ENCODE measurements at regions of chr9 and their contacts with region 1.

Region 1: DNA sequence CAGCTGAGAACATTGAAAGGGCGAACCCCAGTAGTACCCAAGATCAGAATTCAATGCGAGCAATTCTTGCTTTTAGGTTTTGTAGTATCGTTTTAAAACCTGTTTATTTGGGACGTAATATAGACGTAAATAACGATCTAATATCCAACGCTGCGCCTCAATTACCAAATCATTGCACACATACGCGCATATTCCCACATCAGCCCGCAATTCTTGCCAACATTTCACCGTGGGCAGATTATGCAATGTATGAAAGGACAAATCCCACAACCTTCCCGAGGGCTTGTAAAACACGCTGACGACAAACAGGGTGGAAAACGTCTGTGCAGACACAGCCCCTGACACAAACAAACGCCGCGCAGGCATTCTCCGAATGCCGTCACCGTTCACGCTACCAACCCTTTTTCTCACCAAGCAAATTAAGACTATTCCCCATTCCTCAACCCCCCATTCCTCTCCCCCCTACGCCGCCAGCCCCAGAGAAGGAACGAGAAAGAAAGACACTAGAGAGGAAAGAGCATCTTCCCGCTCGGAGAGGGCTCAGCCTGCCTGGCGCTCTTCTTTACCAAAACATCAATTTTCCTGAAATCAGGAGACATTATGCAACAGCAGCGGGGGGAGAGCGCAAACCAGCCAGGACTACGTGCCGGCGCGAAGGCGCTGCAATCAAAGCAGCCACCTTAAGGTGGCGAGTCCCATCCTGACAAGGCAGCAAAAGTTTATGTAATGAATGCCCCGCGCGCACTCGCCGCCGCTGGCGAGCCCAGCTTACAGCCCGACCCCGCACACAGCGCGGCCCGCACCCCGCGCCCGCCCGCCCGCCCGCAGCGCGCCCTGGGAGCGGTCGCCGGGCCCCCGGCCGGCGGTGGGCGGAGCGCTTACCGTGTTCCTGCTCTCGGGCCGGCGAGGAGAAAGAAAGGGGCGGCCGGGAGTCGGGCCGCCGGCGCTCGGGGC is 597 bp downstream of the NFIL3 start:
- DNase-seq: peak; percentile 50 to 70 (median 61)
- ATAC-seq: peak; percentile 54
- H3K4me3 ChIP-seq: peak overlapping the region; percentile 55
- H3K4me3 Mint-ChIP-seq: peak overlapping the region; percentile 86 to 97 (median 92)
- H3K27ac ChIP-seq: peak overlapping the region; percentile 54
- H3K27ac Mint-ChIP-seq: peak overlapping the region; percentile 5 to 98 (median 61)
- H3K4me1 ChIP-seq: peaks cover 20 to 25% of the 10 kb centered on the region in 2 donors
- H3K4me1 Mint-ChIP-seq: peaks cover 18 to 63% (median 45%) of the 10 kb centered on the region in 7 donors
- H3K27me3 ChIP-seq: peaks cover 0 to 12% of the 10 kb centered on the region in 2 donors
- H3K27me3 Mint-ChIP-seq: peaks cover 0 to 35% (median 21%) of the 10 kb centered on the region in 5 donors

Region 2: GRCh38 chr9:89602978-89603766 is 1819.9 kb before region 1 on chr9:
- CTCF ChIA-PET with region 1: no interaction called
- POLR2A ChIA-PET with region 1: no interaction called
- intact Hi-C with region 1: loop called in 1 of 2 experiments (anchors 2 kb)
- DNase-seq: peak; percentile 74 to 88 (median 85)
- ATAC-seq: peak; percentile 55
- H3K4me3 ChIP-seq: peak overlapping the region; percentile 72
- H3K4me3 Mint-ChIP-seq: peak overlapping the region; percentile 79 to 92 (median 88)
- H3K27ac ChIP-seq: no peak overlapping the region
- H3K27ac Mint-ChIP-seq: peak overlapping the region in 7 of 9 donors; percentile 12 to 88 (median 62)
- H3K4me1 ChIP-seq: peaks cover 12 to 23% of the 10 kb centered on the region in 2 donors
- H3K4me1 Mint-ChIP-seq: peaks cover 0 to 34% (median 23%) of the 10 kb centered on the region in 7 donors
- H3K27me3 ChIP-seq: no peaks in the 10 kb centered on the region
- H3K27me3 Mint-ChIP-seq: peaks cover 0 to 21% (median 0%) of the 10 kb centered on the region in 5 donors

Region 3: GRCh38 chr9:90985631-90986030 is 437.4 kb before region 1 on chr9:
- CTCF ChIA-PET with region 1: interaction called, 4 read pairs
- POLR2A ChIA-PET with region 1: no interaction called
- intact Hi-C with region 1: loop called (anchors 1 to 5 kb)
- DNase-seq: no peak
- ATAC-seq: no peak
- H3K4me3 ChIP-seq: no peak overlapping the region
- H3K4me3 Mint-ChIP-seq: no peak overlapping the region
- H3K27ac ChIP-seq: no peak overlapping the region
- H3K27ac Mint-ChIP-seq: no peak overlapping the region
- H3K4me1 ChIP-seq: no peaks in the 10 kb centered on the region
- H3K4me1 Mint-ChIP-seq: peaks cover 0 to 3% (median 0%) of the 10 kb centered on the region in 7 donors
- H3K27me3 ChIP-seq: no peaks in the 10 kb centered on the region
- H3K27me3 Mint-ChIP-seq: peaks cover 0 to 9% (median 5%) of the 10 kb centered on the region in 5 donors

Region 4: GRCh38 chr9:91101611-91102168 is 321.3 kb before region 1 on chr9:
- CTCF ChIA-PET with region 1: interaction called, 3 read pairs
- POLR2A ChIA-PET with region 1: no interaction called
- intact Hi-C with region 1: loop called (anchors 1 to 2 kb)
- DNase-seq: peak; percentile 31 to 91 (median 87)
- ATAC-seq: peak; percentile 90
- H3K4me3 ChIP-seq: no peak overlapping the region
- H3K4me3 Mint-ChIP-seq: peak overlapping the region in 9 of 10 donors; percentile 44 to 82 (median 66)
- H3K27ac ChIP-seq: no peak overlapping the region
- H3K27ac Mint-ChIP-seq: peak overlapping the region in 7 of 9 donors; percentile 43 to 85 (median 78)
- H3K4me1 ChIP-seq: peaks cover 32 to 34% of the 10 kb centered on the region in 2 donors
- H3K4me1 Mint-ChIP-seq: peaks cover 27 to 61% (median 36%) of the 10 kb centered on the region in 7 donors
- H3K27me3 ChIP-seq: no peaks in the 10 kb centered on the region
- H3K27me3 Mint-ChIP-seq: peaks cover 0 to 25% (median 2%) of the 10 kb centered on the region in 5 donors

Region 5: GRCh38 chr9:91253488-91253887 is 169.5 kb before region 1 on chr9:
- CTCF ChIA-PET with region 1: no interaction called
- POLR2A ChIA-PET with region 1: no interaction called
- intact Hi-C with region 1: loop called in 1 of 2 experiments (anchors 1 kb)
- DNase-seq: peak in 6 of 9 donors; percentile 5 to 32 (median 12)
- ATAC-seq: peak; percentile 64
- H3K4me3 ChIP-seq: no peak overlapping the region
- H3K4me3 Mint-ChIP-seq: no peak overlapping the region
- H3K27ac ChIP-seq: no peak overlapping the region
- H3K27ac Mint-ChIP-seq: peak overlapping the region in 1 of 9 donors; percentile 23
- H3K4me1 ChIP-seq: peaks cover 0 to 8% of the 10 kb centered on the region in 2 donors
- H3K4me1 Mint-ChIP-seq: peaks cover 0 to 45% (median 6%) of the 10 kb centered on the region in 7 donors
- H3K27me3 ChIP-seq: no peaks in the 10 kb centered on the region
- H3K27me3 Mint-ChIP-seq: no peaks in the 10 kb centered on the region

Region 6: GRCh38 chr9:91407580-91408318 is 15.3 kb before region 1 on chr9:
- CTCF ChIA-PET with region 1: no interaction called
- POLR2A ChIA-PET with region 1: no interaction called
- intact Hi-C with region 1: no loop called
- DNase-seq: no peak
- ATAC-seq: peak; percentile 37
- H3K4me3 ChIP-seq: no peak overlapping the region
- H3K4me3 Mint-ChIP-seq: no peak overlapping the region
- H3K27ac ChIP-seq: no peak overlapping the region
- H3K27ac Mint-ChIP-seq: no peak overlapping the region
- H3K4me1 ChIP-seq: no peaks in the 10 kb centered on the region
- H3K4me1 Mint-ChIP-seq: peaks cover 0 to 56% (median 4%) of the 10 kb centered on the region in 7 donors
- H3K27me3 ChIP-seq: no peaks in the 10 kb centered on the region
- H3K27me3 Mint-ChIP-seq: peaks cover 0 to 2% (median 0%) of the 10 kb centered on the region in 5 donors

Region 7: GRCh38 chr9:91681461-91682305 is 258.6 kb after region 1 on chr9:
- CTCF ChIA-PET with region 1: interaction called, 4 read pairs
- POLR2A ChIA-PET with region 1: no interaction called
- intact Hi-C with region 1: loop called in 1 of 2 experiments (anchors 5 kb)
- DNase-seq: peak in 7 of 9 donors; percentile 11 to 76 (median 37)
- ATAC-seq: peak; percentile 85
- H3K4me3 ChIP-seq: no peak overlapping the region
- H3K4me3 Mint-ChIP-seq: peak overlapping the region in 6 of 10 donors; percentile 7 to 46 (median 31)
- H3K27ac ChIP-seq: no peak overlapping the region
- H3K27ac Mint-ChIP-seq: no peak overlapping the region
- H3K4me1 ChIP-seq: no peaks in the 10 kb centered on the region
- H3K4me1 Mint-ChIP-seq: peaks cover 0 to 5% (median 0%) of the 10 kb centered on the region in 7 donors
- H3K27me3 ChIP-seq: no peaks in the 10 kb centered on the region
- H3K27me3 Mint-ChIP-seq: peaks cover 21 to 46% (median 35%) of the 10 kb centered on the region in 5 donors

Measured in naive thymus-derived CD4-positive, alpha-beta T cell (primary cell).